CD8-positive, alpha-beta T cell (primary cell): ENCODE measurements at regions of chr5 and their contacts with region 1.

Region 1: GRCh38 chr5:96702503-96703383 is 40.6 kb downstream of the CAST start:
- DNase-seq: peak; percentile 49 to 91 (median 72)
- ATAC-seq: peak; percentile 82
- H3K4me3 ChIP-seq: peak overlapping the region; percentile 72 to 76
- H3K4me3 Mint-ChIP-seq: peak overlapping the region; percentile 82
- H3K27ac ChIP-seq: peak overlapping the region; percentile 73 to 82
- H3K27ac Mint-ChIP-seq: peak overlapping the region; percentile 94
- H3K4me1 ChIP-seq: peaks cover 7% of the 10 kb centered on the region
- H3K4me1 Mint-ChIP-seq: peaks cover 30% of the 10 kb centered on the region
- H3K27me3 ChIP-seq: no peaks in the 10 kb centered on the region
- H3K27me3 Mint-ChIP-seq: no peaks in the 10 kb centered on the region
- CTCF ChIP-seq: no peak

Region 2: GRCh38 chr5:96522635-96523355 is 179.9 kb before region 1 on chr5:
- CTCF ChIA-PET with region 1: no interaction called
- POLR2A ChIA-PET with region 1: no interaction called
- intact Hi-C with region 1: no loop called
- DNase-seq: no peak
- ATAC-seq: no peak
- H3K4me3 ChIP-seq: no peak overlapping the region
- H3K4me3 Mint-ChIP-seq: no peak overlapping the region
- H3K27ac ChIP-seq: no peak overlapping the region
- H3K27ac Mint-ChIP-seq: no peak overlapping the region
- H3K4me1 ChIP-seq: no peaks in the 10 kb centered on the region
- H3K4me1 Mint-ChIP-seq: no peaks in the 10 kb centered on the region
- H3K27me3 ChIP-seq: peaks cover 0 to 2% of the 10 kb centered on the region in 2 experiments
- H3K27me3 Mint-ChIP-seq: peaks cover 3% of the 10 kb centered on the region
- CTCF ChIP-seq: no peak

Region 3: GRCh38 chr5:96714951-96715451 is 12.3 kb after region 1 on chr5:
- CTCF ChIA-PET with region 1: interaction called, 5 read pairs
- POLR2A ChIA-PET with region 1: interaction called, 4 read pairs
- intact Hi-C with region 1: loop called in 1 of 2 experiments (anchors 1 kb)
- DNase-seq: peak in 8 of 9 experiments; percentile 3 to 84 (median 46)
- ATAC-seq: peak; percentile 69
- H3K4me3 ChIP-seq: no peak overlapping the region
- H3K4me3 Mint-ChIP-seq: no peak overlapping the region
- H3K27ac ChIP-seq: peak overlapping the region; percentile 23 to 60
- H3K27ac Mint-ChIP-seq: peak overlapping the region; percentile 80
- H3K4me1 ChIP-seq: peaks cover 16% of the 10 kb centered on the region
- H3K4me1 Mint-ChIP-seq: peaks cover 51% of the 10 kb centered on the region
- H3K27me3 ChIP-seq: no peaks in the 10 kb centered on the region
- H3K27me3 Mint-ChIP-seq: no peaks in the 10 kb centered on the region
- CTCF ChIP-seq: no peak

Region 4: GRCh38 chr5:96734871-96735325 is 32.2 kb after region 1 on chr5:
- CTCF ChIA-PET with region 1: interaction called, 4 read pairs
- POLR2A ChIA-PET with region 1: no interaction called
- intact Hi-C with region 1: loop called in 1 of 2 experiments (anchors 5 kb)
- DNase-seq: no peak
- ATAC-seq: no peak
- H3K4me3 ChIP-seq: no peak overlapping the region
- H3K4me3 Mint-ChIP-seq: no peak overlapping the region
- H3K27ac ChIP-seq: no peak overlapping the region
- H3K27ac Mint-ChIP-seq: peak overlapping the region; percentile 42
- H3K4me1 ChIP-seq: no peaks in the 10 kb centered on the region
- H3K4me1 Mint-ChIP-seq: peaks cover 5% of the 10 kb centered on the region
- H3K27me3 ChIP-seq: no peaks in the 10 kb centered on the region
- H3K27me3 Mint-ChIP-seq: no peaks in the 10 kb centered on the region
- CTCF ChIP-seq: no peak